ENCODE measurements at regions of chr17 and their contacts with region 1.

Region 1: GRCh38 chr17:78745407-78746088 is 36.5 kb downstream of the CYTH1 start:
- DNase-seq: peak in 4 of 5 donors; percentile 56 to 61 (median 60)
- H3K4me3 ChIP-seq: peak overlapping the region; percentile 9 to 31
- H3K4me3 Mint-ChIP-seq: peak overlapping the region; percentile 67 to 89 (median 78)
- H3K27ac ChIP-seq: peak overlapping the region; percentile 73
- H3K27ac Mint-ChIP-seq: peak overlapping the region; percentile 88 to 98 (median 94)
- H3K4me1 ChIP-seq: peaks cover 98% of the 10 kb centered on the region
- H3K4me1 Mint-ChIP-seq: peaks cover 76 to 98% (median 85%) of the 10 kb centered on the region in 4 donors
- H3K27me3 ChIP-seq: no peaks in the 10 kb centered on the region
- H3K27me3 Mint-ChIP-seq: no peaks in the 10 kb centered on the region

Region 2: DNA sequence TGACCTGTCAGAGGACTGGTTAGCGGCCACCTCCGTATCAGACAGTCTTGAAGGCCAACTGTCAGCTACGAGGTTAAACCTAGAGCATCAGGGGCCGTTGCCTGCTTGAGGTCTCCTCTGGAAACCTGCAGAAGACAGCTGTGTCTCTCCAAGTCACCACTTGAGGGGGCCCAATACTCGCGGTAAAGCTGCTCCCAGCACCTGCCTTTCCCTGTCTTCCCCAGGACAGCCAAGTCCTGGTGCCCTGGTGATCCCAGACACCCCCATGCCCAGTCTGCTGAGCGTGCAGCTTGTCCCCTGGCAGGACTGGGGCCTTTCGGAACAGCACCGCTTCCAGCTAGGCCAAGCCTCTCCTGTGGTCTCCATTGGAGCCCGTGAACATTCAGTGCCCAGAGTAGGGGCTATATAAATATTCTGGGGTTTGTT is 248.4 kb before region 1 on chr17:
- CTCF ChIA-PET with region 1: no interaction called
- POLR2A ChIA-PET with region 1: no interaction called
- intact Hi-C with region 1: loop called (anchors 1 kb)
- DNase-seq: peak; percentile 47 to 63 (median 58)
- H3K4me3 ChIP-seq: no peak overlapping the region
- H3K4me3 Mint-ChIP-seq: no peak overlapping the region
- H3K27ac ChIP-seq: no peak overlapping the region
- H3K27ac Mint-ChIP-seq: no peak overlapping the region
- H3K4me1 ChIP-seq: no peaks in the 10 kb centered on the region
- H3K4me1 Mint-ChIP-seq: no peaks in the 10 kb centered on the region
- H3K27me3 ChIP-seq: no peaks in the 10 kb centered on the region
- H3K27me3 Mint-ChIP-seq: no peaks in the 10 kb centered on the region

Region 3: DNA sequence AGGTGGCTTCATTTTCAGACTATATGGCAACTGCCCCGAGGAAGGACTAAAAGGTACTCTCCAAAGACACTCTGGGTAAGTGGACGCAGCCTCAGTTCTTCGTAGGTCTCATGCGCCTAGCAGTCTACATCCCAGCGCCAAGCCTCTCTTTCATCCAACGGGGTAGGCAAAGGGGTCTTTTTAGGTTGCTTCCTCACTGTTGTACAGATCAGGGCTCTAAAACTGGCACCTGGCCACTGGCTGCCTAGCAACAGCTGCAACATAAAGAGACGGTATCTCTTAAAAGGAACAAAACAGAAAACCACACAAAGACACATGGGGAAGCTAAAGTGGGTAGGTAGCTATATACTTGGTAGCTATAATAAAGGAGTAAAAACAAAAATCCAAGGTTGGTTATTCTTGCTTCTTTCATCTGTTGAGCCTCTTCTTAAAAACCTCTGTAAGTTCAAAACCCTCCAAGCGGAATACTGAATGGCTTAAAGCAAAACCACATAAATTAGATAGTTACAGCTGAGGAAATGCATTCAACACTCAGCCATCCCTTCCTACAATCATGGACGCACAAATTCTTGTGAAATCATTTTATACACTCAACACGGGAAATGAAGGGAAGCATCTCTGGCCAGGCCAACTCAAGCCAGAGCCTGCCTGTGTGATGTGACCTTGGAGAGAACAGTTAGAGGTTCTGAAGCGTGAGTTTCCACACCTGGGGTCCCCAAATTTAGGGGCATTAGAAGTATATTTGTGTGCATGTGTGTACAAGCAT is 13.8 kb after region 1 on chr17:
- CTCF ChIA-PET with region 1: interaction called, 24 read pairs
- POLR2A ChIA-PET with region 1: interaction called, 154 read pairs
- intact Hi-C with region 1: loop called (anchors 1 kb)
- DNase-seq: peak; percentile 87 to 95 (median 92)
- H3K4me3 ChIP-seq: peak overlapping the region; percentile 26 to 51
- H3K4me3 Mint-ChIP-seq: peak overlapping the region; percentile 67 to 92 (median 83)
- H3K27ac ChIP-seq: peak overlapping the region; percentile 88
- H3K27ac Mint-ChIP-seq: peak overlapping the region; percentile 91 to 99 (median 98)
- H3K4me1 ChIP-seq: peaks cover 94% of the 10 kb centered on the region
- H3K4me1 Mint-ChIP-seq: peaks cover 56 to 88% (median 61%) of the 10 kb centered on the region in 4 donors
- H3K27me3 ChIP-seq: no peaks in the 10 kb centered on the region
- H3K27me3 Mint-ChIP-seq: no peaks in the 10 kb centered on the region

Region 4: DNA sequence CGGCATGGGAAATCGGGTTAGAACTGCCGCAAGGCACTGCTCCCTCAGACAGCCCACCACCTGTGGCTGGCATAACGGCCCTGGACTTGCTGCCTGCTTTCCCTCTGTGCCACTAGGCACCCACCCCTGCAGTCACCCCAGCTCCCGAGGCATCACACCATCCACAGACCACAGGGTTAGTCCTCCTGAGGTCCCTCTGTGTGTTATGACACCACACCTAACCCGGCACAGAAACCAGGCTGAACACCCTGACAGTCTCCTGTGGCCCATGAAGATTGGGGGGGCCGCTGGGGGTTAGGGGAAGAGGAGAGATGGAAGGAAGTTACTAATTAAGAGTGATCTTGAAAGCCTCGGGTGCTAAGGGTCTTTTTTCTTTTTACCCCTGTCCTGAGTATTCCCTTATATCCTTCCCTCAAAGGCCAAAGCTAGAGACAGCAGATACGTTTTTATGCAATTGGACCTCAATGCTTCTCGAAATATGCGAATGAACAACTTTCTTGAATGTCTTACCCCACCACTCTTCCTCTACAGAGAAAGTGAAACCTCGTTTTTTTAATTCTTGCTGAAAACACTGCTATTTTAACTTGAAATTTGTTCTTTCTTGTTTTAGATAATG is 29.5 kb after region 1 on chr17:
- CTCF ChIA-PET with region 1: interaction called, 17 read pairs
- POLR2A ChIA-PET with region 1: interaction called, 961 read pairs
- intact Hi-C with region 1: loop called (anchors 1 kb)
- DNase-seq: peak; percentile 57 to 85 (median 63)
- H3K4me3 ChIP-seq: peak overlapping the region; percentile 64 to 70
- H3K4me3 Mint-ChIP-seq: peak overlapping the region; percentile 88 to 97 (median 94)
- H3K27ac ChIP-seq: peak overlapping the region; percentile 81
- H3K27ac Mint-ChIP-seq: peak overlapping the region; percentile 92 to 99 (median 97)
- H3K4me1 ChIP-seq: peaks cover 94% of the 10 kb centered on the region
- H3K4me1 Mint-ChIP-seq: peaks cover 45 to 82% (median 57%) of the 10 kb centered on the region in 4 donors
- H3K27me3 ChIP-seq: no peaks in the 10 kb centered on the region
- H3K27me3 Mint-ChIP-seq: no peaks in the 10 kb centered on the region

Region 5: GRCh38 chr17:78818932-78819331 is 73.4 kb after region 1 on chr17:
- CTCF ChIA-PET with region 1: interaction called, 13 read pairs
- POLR2A ChIA-PET with region 1: interaction called, 21 read pairs
- intact Hi-C with region 1: no loop called
- DNase-seq: peak; percentile 82 to 87 (median 84)
- H3K4me3 ChIP-seq: peak overlapping the region in 1 of 2 donors; percentile 35
- H3K4me3 Mint-ChIP-seq: peak overlapping the region; percentile 56 to 83 (median 76)
- H3K27ac ChIP-seq: peak overlapping the region; percentile 83
- H3K27ac Mint-ChIP-seq: peak overlapping the region; percentile 86 to 100 (median 96)
- H3K4me1 ChIP-seq: peaks cover 59% of the 10 kb centered on the region
- H3K4me1 Mint-ChIP-seq: peaks cover 33 to 81% (median 50%) of the 10 kb centered on the region in 4 donors
- H3K27me3 ChIP-seq: no peaks in the 10 kb centered on the region
- H3K27me3 Mint-ChIP-seq: no peaks in the 10 kb centered on the region